Heart left ventricle (tissue), 16 donors: ENCODE measurements at regions of chr4 and their contacts with region 1.

Region 1: GRCh38 chr4:453267-453666 is 45.7 kb downstream of the ZNF721 start:
- DNase-seq: no peak
- ATAC-seq: no peak
- H3K4me3 ChIP-seq: no peak overlapping the region
- H3K27ac ChIP-seq: no peak overlapping the region
- H3K4me1 ChIP-seq: no peaks in the 10 kb centered on the region
- H3K27me3 ChIP-seq: no peaks in the 10 kb centered on the region
- CTCF ChIP-seq: no peak
- POLR2A ChIP-seq: no peak

Region 2: GRCh38 chr4:242121-242848 is 211.0 kb before region 1 on chr4:
- intact Hi-C with region 1: no loop called
- DNase-seq: peak; percentile 54 to 76 (median 67)
- ATAC-seq: peak; percentile 81 to 98 (median 94)
- H3K4me3 ChIP-seq: peak overlapping the region; percentile 16 to 67 (median 52)
- H3K27ac ChIP-seq: peak overlapping the region in 10 of 12 donors; percentile 10 to 77 (median 41)
- H3K4me1 ChIP-seq: peaks cover 0 to 12% (median 9%) of the 10 kb centered on the region in 12 donors
- H3K27me3 ChIP-seq: no peaks in the 10 kb centered on the region
- CTCF ChIP-seq: peak; percentile 84 to 98 (median 93)
- POLR2A ChIP-seq: no peak

Region 3: GRCh38 chr4:256492-256891 is 196.8 kb before region 1 on chr4:
- intact Hi-C with region 1: loop called in 1 of 10 experiments (anchors 10 kb)
- DNase-seq: no peak
- ATAC-seq: no peak
- H3K4me3 ChIP-seq: no peak overlapping the region
- H3K27ac ChIP-seq: no peak overlapping the region
- H3K4me1 ChIP-seq: no peaks in the 10 kb centered on the region
- H3K27me3 ChIP-seq: no peaks in the 10 kb centered on the region
- CTCF ChIP-seq: no peak
- POLR2A ChIP-seq: no peak